Activated CD4-positive, alpha-beta T cell treated with anti-CD3 and anti-CD28 coated beads for 36 hours (primary cell): ENCODE measurements at regions of chr10 and their contacts with region 1.

Region 1: DNA sequence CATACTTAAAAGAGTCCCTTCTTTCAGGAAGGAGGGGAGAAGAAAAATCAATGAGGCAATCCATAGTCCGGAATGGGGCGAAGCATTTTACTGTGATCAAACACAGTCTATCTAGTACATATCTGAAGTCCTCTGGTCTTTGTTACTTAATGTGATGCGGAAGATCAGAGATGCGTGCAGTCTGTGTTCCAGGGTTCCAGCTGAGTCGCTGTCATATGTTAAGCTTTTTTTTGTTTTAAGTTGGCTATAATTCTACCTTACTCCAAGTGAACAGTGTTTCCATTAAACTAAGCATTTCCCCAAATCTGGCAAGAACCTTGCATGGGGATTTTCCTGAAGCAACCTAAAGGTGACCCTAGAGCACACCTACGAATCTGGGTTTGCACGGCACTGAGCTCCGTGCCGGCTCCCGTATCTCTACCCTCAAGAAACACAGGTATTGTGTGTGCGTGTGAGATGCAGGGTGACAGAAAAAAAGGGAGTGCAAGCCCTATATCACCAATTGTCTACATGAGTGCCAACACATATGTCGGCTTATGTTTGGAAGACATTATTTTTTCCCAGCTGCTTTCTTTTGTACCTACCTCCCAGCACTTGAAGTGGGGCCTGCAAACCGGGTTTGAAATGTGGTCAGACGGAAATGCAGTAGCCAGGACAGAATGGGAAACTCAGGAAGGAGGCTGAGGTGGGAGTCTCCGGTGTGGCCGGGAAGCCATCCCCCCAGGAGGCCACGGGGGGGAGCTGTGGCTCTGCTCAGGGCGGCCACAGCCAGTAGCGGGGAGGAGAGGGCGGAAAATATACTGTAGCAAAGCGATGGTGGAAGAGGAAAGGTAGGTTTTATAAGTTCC is 435.8 kb upstream of the MGMT start:
- DNase-seq: peak; percentile 73
- ATAC-seq: peak; percentile 79
- H3K4me3 Mint-ChIP-seq: no peak overlapping the region
- H3K27ac Mint-ChIP-seq: no peak overlapping the region
- H3K4me1 Mint-ChIP-seq: peaks cover 16% of the 10 kb centered on the region
- H3K27me3 Mint-ChIP-seq: peaks cover 20% of the 10 kb centered on the region

Region 2: GRCh38 chr10:128958834-128959690 is 72.2 kb before region 1 on chr10:
- CTCF ChIA-PET with region 1: no interaction called
- POLR2A ChIA-PET with region 1: no interaction called
- intact Hi-C with region 1: no loop called
- DNase-seq: no peak
- ATAC-seq: no peak
- H3K4me3 Mint-ChIP-seq: no peak overlapping the region
- H3K27ac Mint-ChIP-seq: no peak overlapping the region
- H3K4me1 Mint-ChIP-seq: no peaks in the 10 kb centered on the region
- H3K27me3 Mint-ChIP-seq: no peaks in the 10 kb centered on the region

Region 3: DNA sequence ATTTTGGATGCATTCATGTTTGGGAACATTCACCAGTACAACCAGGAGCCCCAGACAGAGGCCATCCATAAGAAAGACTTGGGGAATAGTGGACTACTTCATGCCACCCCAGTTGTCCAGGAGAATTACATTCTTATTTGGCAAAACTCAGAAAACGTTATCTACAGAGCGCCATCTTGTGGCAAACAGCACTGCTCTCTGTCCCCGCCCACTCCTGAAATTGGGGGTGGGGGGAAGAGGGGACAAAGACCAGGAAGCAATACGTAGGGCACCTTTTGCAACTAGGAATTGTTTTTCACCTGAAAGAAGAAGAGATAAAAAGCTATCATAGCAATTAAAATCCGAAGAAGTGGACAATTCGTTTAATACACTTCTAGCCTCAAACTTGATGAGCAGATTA is 301.3 kb after region 1 on chr10:
- CTCF ChIA-PET with region 1: interaction called, 7 read pairs
- POLR2A ChIA-PET with region 1: no interaction called
- intact Hi-C with region 1: loop called (anchors 1 kb)
- DNase-seq: peak; percentile 48
- ATAC-seq: no peak
- H3K4me3 Mint-ChIP-seq: no peak overlapping the region
- H3K27ac Mint-ChIP-seq: no peak overlapping the region
- H3K4me1 Mint-ChIP-seq: no peaks in the 10 kb centered on the region
- H3K27me3 Mint-ChIP-seq: peaks cover 22% of the 10 kb centered on the region

Region 4: DNA sequence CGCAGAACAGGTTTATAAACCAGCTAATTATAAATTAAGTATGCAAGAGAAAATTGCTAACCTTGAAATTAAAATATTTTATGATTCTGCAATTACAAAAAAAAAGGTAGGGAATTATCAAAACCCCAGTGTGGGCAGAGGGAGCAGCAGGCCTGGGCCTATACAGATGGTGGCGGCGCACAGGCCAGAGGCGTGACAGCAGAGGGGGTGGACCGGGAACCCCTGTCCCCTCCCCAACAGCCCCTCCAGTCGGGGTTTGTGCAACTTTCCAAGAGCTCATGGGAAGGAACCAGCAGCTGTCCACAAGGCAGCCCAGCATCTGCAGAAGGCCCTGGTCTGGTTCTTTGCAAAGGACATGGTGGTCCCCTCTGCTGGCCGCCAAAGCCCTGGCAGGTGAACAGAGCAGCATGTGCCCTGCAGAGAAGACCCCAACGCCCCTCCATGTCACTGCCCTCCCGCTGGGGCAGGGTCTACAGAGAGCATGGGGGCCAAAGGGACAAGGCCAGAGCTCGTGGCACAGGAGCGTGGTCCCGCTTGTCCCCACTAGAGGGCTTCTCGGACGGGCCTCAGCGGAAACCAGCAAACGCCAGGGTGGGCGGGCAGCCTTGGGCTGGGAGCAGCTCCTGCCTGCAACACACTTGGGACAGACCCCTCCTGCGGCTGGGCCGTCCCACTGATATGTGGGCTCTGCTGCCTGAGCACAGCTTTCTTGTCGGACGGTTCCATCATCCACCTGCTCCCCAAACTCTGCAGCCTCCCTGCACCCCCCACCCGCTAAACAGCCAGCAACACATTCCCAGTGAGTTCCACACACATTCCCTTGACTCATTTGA is 857.8 kb after region 1 on chr10:
- CTCF ChIA-PET with region 1: no interaction called
- POLR2A ChIA-PET with region 1: no interaction called
- intact Hi-C with region 1: loop called in 1 of 2 experiments (anchors 5 kb)
- DNase-seq: peak; percentile 70
- ATAC-seq: peak; percentile 61
- H3K4me3 Mint-ChIP-seq: no peak overlapping the region
- H3K27ac Mint-ChIP-seq: no peak overlapping the region
- H3K4me1 Mint-ChIP-seq: no peaks in the 10 kb centered on the region
- H3K27me3 Mint-ChIP-seq: no peaks in the 10 kb centered on the region

Region 5: DNA sequence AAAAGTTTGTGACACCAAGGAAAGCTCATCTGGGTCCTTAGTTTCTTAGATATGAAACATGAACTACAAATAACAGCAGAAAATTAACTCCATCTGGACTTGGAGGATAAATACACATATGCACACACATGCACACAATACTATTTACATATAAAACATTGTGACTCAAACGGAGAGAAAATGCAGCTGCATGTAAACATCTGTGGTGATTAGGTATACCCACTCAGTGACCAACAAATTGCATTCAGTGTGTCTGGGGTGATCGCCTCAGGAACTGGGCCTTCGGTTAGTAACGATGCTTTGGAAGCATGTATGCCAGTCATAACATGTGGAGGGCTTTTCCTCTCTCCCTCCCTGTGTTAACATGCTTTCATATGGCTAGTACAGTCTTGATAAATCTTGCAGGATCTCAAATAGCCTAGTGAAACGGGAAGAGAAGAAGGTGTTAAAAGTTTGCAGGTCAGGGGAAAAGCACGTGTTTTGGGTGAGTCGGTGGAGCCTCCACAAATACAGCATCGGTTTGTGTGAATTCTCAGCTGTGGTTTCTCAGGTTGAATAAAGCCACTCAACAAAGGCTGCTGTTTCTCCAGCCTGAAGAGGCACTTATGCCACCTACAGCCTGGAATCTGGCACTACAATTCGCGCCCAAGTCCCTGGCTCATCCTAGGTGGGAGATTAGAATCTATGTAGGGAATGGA is 1096.3 kb after region 1 on chr10:
- CTCF ChIA-PET with region 1: no interaction called
- POLR2A ChIA-PET with region 1: no interaction called
- intact Hi-C with region 1: loop called (anchors 1 to 10 kb)
- DNase-seq: peak; percentile 75
- ATAC-seq: peak; percentile 97
- H3K4me3 Mint-ChIP-seq: no peak overlapping the region
- H3K27ac Mint-ChIP-seq: no peak overlapping the region
- H3K4me1 Mint-ChIP-seq: peaks cover 7% of the 10 kb centered on the region
- H3K27me3 Mint-ChIP-seq: peaks cover 18% of the 10 kb centered on the region

Region 6: DNA sequence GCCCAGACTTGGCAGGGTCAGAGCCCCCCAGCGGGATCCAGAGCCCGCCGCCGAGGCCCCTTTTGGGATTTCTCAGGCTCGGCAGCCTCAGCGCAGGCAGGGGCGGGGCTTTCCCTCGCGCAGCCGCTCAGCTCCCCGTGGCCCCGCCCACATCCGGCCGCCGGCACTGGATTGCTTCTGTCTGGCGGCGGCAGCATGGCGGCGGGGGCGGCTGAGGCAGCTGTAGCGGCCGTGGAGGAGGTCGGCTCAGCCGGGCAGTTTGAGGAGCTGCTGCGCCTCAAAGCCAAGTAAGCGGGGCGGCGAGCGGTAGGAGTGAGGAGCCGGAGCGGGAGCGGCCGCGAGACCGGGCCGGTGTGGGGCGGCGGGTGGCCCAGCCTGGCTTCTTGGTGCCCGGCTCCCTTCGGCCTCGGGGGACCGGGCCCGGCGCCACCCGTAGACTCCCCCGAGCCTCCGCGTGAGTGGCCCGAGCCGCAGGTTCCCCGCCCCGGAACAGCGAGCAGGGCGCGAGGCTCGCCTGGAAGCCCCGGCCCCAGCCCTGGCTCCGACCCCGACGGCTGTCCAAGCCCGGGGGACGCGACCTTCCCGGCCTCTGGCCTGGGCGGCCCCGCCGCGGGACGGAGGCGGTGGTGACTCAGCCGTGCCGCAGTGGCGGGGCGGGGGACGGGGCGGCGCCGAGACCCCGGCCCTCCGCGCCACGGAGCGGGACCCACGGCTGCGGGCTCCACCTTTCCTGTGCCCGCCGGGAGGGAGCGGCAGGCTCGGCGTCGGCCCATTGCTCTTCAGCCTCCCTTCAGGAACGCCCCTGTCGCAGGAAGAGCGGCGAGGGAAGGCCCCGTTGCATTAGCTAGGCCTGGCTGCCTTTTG is 1105.2 kb after region 1 on chr10 and contains the start of gene GLRX3:
- CTCF ChIA-PET with region 1: no interaction called
- POLR2A ChIA-PET with region 1: no interaction called
- intact Hi-C with region 1: loop called in 1 of 2 experiments (anchors 10 kb)
- DNase-seq: peak; percentile 95
- ATAC-seq: peak; percentile 82
- H3K4me3 Mint-ChIP-seq: peak within 1 kb of the TSS; percentile 84
- H3K27ac Mint-ChIP-seq: peak within 1 kb of the TSS; percentile 82
- H3K4me1 Mint-ChIP-seq: peaks cover 41% of the 10 kb centered on the region
- H3K27me3 Mint-ChIP-seq: peaks cover 2% of the 10 kb centered on the region
- total RNA-seq, gene GLRX3: 117 to 123 TPM